Heart left ventricle (tissue), 16 donors: ENCODE measurements at regions of chr2 and their contacts with region 1.

Region 1: DNA sequence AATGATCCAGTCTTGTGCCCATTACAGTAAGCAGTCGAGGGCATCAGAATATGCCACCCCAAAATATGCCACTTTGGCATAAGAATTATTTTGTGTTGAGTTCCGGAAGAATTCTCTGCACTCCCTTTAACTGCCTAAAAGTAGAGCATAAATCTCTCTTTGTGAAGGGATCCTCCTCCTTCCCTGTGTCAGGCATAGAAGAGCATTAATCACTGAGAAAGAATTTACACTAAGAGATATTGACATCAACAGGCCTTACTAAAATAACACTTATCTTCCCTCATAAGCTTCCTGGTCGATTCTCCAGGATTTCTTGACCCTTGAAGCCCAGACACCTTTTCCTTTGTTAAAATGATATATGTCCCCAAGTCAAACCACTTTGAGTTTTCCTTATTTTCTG is 27.6 kb upstream of the KYNU start:
- DNase-seq: no peak
- ATAC-seq: no peak
- H3K4me3 ChIP-seq: no peak overlapping the region
- H3K27ac ChIP-seq: no peak overlapping the region
- H3K4me1 ChIP-seq: no peaks in the 10 kb centered on the region
- H3K27me3 ChIP-seq: peaks cover 0 to 3% (median 0%) of the 10 kb centered on the region in 9 donors
- CTCF ChIP-seq: no peak
- POLR2A ChIP-seq: no peak

Region 2: GRCh38 chr2:142863485-142863961 is 13.7 kb after region 1 on chr2:
- intact Hi-C with region 1: loop called in 1 of 10 experiments (anchors 2 kb)
- DNase-seq: no peak
- ATAC-seq: no peak
- H3K4me3 ChIP-seq: no peak overlapping the region
- H3K27ac ChIP-seq: no peak overlapping the region
- H3K4me1 ChIP-seq: peaks cover 0 to 29% (median 0%) of the 10 kb centered on the region in 12 donors
- H3K27me3 ChIP-seq: no peaks in the 10 kb centered on the region
- CTCF ChIP-seq: no peak
- POLR2A ChIP-seq: no peak